SK-N-SH (cell line): ENCODE measurements at regions of chr9 and their contacts with region 1.

Region 1: GRCh38 chr9:121439711-121440664 is 59.7 kb downstream of the GGTA1 start:
- DNase-seq: peak; percentile 33
- H3K4me3 ChIP-seq: no peak overlapping the region; a peak in 1 of 4 replicates
- H3K27ac ChIP-seq: no peak overlapping the region
- H3K4me1 ChIP-seq: no peaks in the 10 kb centered on the region
- H3K27me3 ChIP-seq: peaks cover 17% of the 10 kb centered on the region; the same call in 1 of the 2 replicates
- CTCF ChIP-seq: peak; percentile 53
- EP300 ChIP-seq: no peak
- RAD21 ChIP-seq: peak; percentile 45

Region 2: GRCh38 chr9:121450241-121450640 is 10.3 kb after region 1 on chr9:
- CTCF ChIA-PET with region 1: interaction called, 17 read pairs
- POLR2A ChIA-PET with region 1: no interaction called
- DNase-seq: no peak
- H3K4me3 ChIP-seq: no peak overlapping the region
- H3K27ac ChIP-seq: no peak overlapping the region
- H3K4me1 ChIP-seq: no peaks in the 10 kb centered on the region; a peak in 2 of 4 replicates
- H3K27me3 ChIP-seq: no peaks in the 10 kb centered on the region
- CTCF ChIP-seq: no peak
- EP300 ChIP-seq: no peak
- RAD21 ChIP-seq: no peak